ENCODE measurements at regions of chr1 and their contacts with region 1.

Region 1: GRCh38 chr1:15417365-15417934 is 7.8 kb downstream of the EFHD2 start:
- DNase-seq: peak; percentile 61
- ATAC-seq: peak; percentile 56
- H3K4me3 ChIP-seq: no peak overlapping the region
- H3K4me3 Mint-ChIP-seq: peak overlapping the region; percentile 52
- H3K27ac ChIP-seq: peak overlapping the region; percentile 38 to 62
- H3K27ac Mint-ChIP-seq: peak overlapping the region; percentile 79
- H3K4me1 ChIP-seq: peaks cover 30 to 54% of the 10 kb centered on the region in 2 donors
- H3K4me1 Mint-ChIP-seq: peaks cover 56% of the 10 kb centered on the region
- H3K27me3 ChIP-seq: no peaks in the 10 kb centered on the region
- H3K27me3 Mint-ChIP-seq: no peaks in the 10 kb centered on the region
- CTCF ChIP-seq: no peak

Region 2: GRCh38 chr1:15400627-15401026 is 16.8 kb before region 1 on chr1:
- CTCF ChIA-PET with region 1: interaction called, 10 read pairs
- POLR2A ChIA-PET with region 1: interaction called, 8 read pairs
- intact Hi-C with region 1: no loop called
- DNase-seq: no peak
- ATAC-seq: no peak
- H3K4me3 ChIP-seq: no peak overlapping the region
- H3K4me3 Mint-ChIP-seq: no peak overlapping the region
- H3K27ac ChIP-seq: no peak overlapping the region
- H3K27ac Mint-ChIP-seq: no peak overlapping the region
- H3K4me1 ChIP-seq: no peaks in the 10 kb centered on the region
- H3K4me1 Mint-ChIP-seq: peaks cover 4% of the 10 kb centered on the region
- H3K27me3 ChIP-seq: no peaks in the 10 kb centered on the region
- H3K27me3 Mint-ChIP-seq: peaks cover 3% of the 10 kb centered on the region
- CTCF ChIP-seq: no peak

Measured in B cell (primary cell).